ENCODE measurements at regions of chr1 and their contacts with region 1.

Region 1: DNA sequence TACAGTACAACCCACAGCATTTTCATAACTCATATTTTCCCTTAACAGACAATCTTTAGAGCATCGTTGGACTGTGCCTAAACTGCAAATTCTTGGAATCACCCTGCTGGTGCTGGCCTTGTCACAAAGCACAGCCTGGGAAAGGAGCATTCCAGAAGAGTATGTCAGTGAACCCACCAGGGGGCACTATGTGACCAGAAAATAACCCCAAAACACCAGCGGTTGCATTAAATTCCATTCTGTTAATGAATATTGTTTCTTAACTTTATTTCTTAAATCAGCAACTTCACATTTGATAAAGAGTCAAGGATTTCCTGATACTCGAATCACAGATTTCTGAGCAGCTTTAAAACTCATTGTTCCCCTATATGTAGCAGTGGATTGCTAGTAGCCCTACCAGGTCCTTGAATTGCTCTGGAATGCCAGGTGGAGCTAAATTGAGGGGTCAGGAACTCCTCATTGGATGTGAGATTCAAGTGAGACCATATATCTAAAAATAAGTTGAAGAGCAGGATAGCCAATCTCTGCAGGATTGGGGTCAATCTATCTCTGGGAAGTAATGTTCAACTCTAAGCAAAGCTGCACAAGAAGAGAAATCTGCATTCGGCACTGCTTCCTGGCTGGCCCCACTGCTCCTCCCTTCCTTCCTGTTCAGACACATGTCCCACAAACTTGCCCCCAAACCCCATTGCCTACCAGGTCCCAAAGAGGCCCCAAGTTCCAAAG is 12.7 kb upstream of the RAB4A start:
- DNase-seq: peak; percentile 59 to 72
- ATAC-seq: peak; percentile 87 to 91
- H3K4me3 ChIP-seq: no peak overlapping the region
- H3K27ac ChIP-seq: no peak overlapping the region
- H3K4me1 ChIP-seq: peaks cover 11% of the 10 kb centered on the region
- CTCF ChIP-seq: peak; percentile 96
- EP300 ChIP-seq: no peak
- POLR2A ChIP-seq: no peak
- RAD21 ChIP-seq: peak; percentile 94 to 96

Region 2: GRCh38 chr1:228664399-228664914 is 593.7 kb before region 1 on chr1:
- CTCF ChIA-PET with region 1: interaction called, 60 read pairs
- POLR2A ChIA-PET with region 1: no interaction called
- DNase-seq: peak; percentile 75 to 84
- ATAC-seq: peak; percentile 81 to 90
- H3K4me3 ChIP-seq: peak overlapping the region; percentile 39
- H3K27ac ChIP-seq: peak overlapping the region; percentile 48 to 68; a peak in 3 of 6 replicates
- H3K4me1 ChIP-seq: no peaks in the 10 kb centered on the region
- CTCF ChIP-seq: peak; percentile 94
- EP300 ChIP-seq: no peak
- POLR2A ChIP-seq: no peak
- RAD21 ChIP-seq: peak; percentile 96 to 97

Region 3: GRCh38 chr1:228734881-228735801 is 523.1 kb before region 1 on chr1 and contains the start of gene RHOU:
- CTCF ChIA-PET with region 1: interaction called, 10 read pairs
- POLR2A ChIA-PET with region 1: interaction called, 4 read pairs
- DNase-seq: peak; percentile 67 to 68
- ATAC-seq: peak; percentile 95
- H3K4me3 ChIP-seq: peak within 1 kb of the TSS; percentile 88
- H3K27ac ChIP-seq: peak within 1 kb of the TSS; percentile 93 to 95
- H3K4me1 ChIP-seq: peaks cover 18% of the 10 kb centered on the region; the same call in 2 of the 3 replicates
- CTCF ChIP-seq: peak; percentile 96
- EP300 ChIP-seq: no peak
- POLR2A ChIP-seq: peak; percentile 37; the same call in 1 of the 2 replicates
- RAD21 ChIP-seq: peak; percentile 56 to 98
- polyA plus RNA-seq, gene RHOU: 11.5 and 12.8 TPM in 2 replicates

Region 4: DNA sequence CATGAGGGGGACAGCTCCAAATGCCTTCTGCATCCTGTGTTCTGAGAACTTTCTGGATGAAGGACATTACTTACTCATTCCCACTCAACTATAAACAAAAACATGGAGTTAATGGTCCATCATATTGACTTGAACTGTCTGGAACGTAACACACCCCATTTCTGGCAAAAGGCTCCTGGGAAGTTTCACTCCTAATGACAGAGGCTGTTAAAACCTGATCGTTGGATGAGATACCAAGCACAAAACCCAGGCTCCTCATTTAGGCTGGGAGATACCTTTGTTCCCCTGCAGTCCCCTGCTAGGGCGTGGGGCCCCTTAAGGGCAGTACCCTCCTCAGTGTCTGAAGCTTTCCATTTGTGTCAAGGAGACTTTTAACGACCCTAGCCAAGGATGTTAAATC is 444.0 kb before region 1 on chr1:
- CTCF ChIA-PET with region 1: no interaction called
- POLR2A ChIA-PET with region 1: no interaction called
- DNase-seq: no peak
- ATAC-seq: no peak
- H3K4me3 ChIP-seq: no peak overlapping the region
- H3K27ac ChIP-seq: no peak overlapping the region
- H3K4me1 ChIP-seq: peaks cover 11% of the 10 kb centered on the region
- CTCF ChIP-seq: no peak
- EP300 ChIP-seq: no peak
- POLR2A ChIP-seq: no peak
- RAD21 ChIP-seq: no peak

Region 5: GRCh38 chr1:229199211-229199849 is 58.9 kb before region 1 on chr1:
- CTCF ChIA-PET with region 1: no interaction called
- POLR2A ChIA-PET with region 1: no interaction called
- DNase-seq: no peak
- ATAC-seq: no peak
- H3K4me3 ChIP-seq: no peak overlapping the region
- H3K27ac ChIP-seq: no peak overlapping the region
- H3K4me1 ChIP-seq: no peaks in the 10 kb centered on the region
- CTCF ChIP-seq: no peak
- EP300 ChIP-seq: no peak
- POLR2A ChIP-seq: no peak
- RAD21 ChIP-seq: no peak

Region 6: GRCh38 chr1:229270547-229271447 is 12.6 kb after region 1 on chr1 and contains the start of gene RAB4A:
- CTCF ChIA-PET with region 1: interaction called, 33 read pairs
- POLR2A ChIA-PET with region 1: interaction called, 7 read pairs
- DNase-seq: peak; percentile 70 to 93
- ATAC-seq: peak; percentile 94 to 95
- H3K4me3 ChIP-seq: peak within 1 kb of the TSS; percentile 79
- H3K27ac ChIP-seq: peak within 1 kb of the TSS; percentile 89 to 99
- H3K4me1 ChIP-seq: peaks cover 33% of the 10 kb centered on the region
- CTCF ChIP-seq: no peak
- EP300 ChIP-seq: no peak
- POLR2A ChIP-seq: peak; percentile 80
- RAD21 ChIP-seq: no peak
- polyA plus RNA-seq, gene RAB4A: 20.6 and 38.4 TPM in 2 replicates

Region 7: DNA sequence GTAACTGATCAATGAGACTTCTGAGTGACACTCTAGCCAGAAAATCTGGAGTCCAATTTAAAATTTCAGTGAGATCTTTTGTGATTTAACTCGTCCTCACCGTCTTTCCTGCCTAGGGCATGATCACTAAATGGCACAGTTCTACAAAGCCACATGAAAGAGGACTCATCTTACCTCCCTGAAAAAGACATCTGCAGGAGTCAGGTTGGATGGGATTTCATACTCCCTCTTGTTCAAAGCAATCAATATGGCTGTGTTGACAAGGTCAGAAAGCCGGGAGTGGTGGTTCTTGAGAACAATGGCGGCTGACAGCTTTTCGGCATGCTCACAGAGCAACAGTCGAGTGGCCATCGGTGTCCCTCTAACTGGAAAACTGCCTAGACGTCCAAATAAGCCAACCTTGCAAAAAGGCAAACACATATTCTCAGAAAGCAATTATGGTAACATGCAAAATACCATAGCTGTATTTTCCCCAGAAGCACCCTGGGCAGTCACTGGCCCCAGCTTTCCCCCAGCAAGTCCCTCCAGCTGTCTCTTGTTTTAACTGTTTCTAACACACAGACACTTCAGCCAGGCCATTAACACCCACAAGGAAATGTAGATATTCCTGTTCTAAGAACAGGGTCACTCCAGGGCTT is 212.3 kb after region 1 on chr1:
- CTCF ChIA-PET with region 1: interaction called, 36 read pairs
- POLR2A ChIA-PET with region 1: no interaction called
- DNase-seq: no peak
- ATAC-seq: no peak
- H3K4me3 ChIP-seq: no peak overlapping the region
- H3K27ac ChIP-seq: no peak overlapping the region
- H3K4me1 ChIP-seq: no peaks in the 10 kb centered on the region
- CTCF ChIP-seq: no peak
- EP300 ChIP-seq: no peak
- POLR2A ChIP-seq: no peak
- RAD21 ChIP-seq: no peak

Region 8: GRCh38 chr1:229495782-229496181 is 237.6 kb after region 1 on chr1:
- CTCF ChIA-PET with region 1: interaction called, 15 read pairs
- POLR2A ChIA-PET with region 1: no interaction called
- DNase-seq: no peak
- ATAC-seq: no peak
- H3K4me3 ChIP-seq: no peak overlapping the region
- H3K27ac ChIP-seq: no peak overlapping the region
- H3K4me1 ChIP-seq: no peaks in the 10 kb centered on the region
- CTCF ChIP-seq: no peak
- EP300 ChIP-seq: no peak
- POLR2A ChIP-seq: no peak
- RAD21 ChIP-seq: no peak

Region 9: DNA sequence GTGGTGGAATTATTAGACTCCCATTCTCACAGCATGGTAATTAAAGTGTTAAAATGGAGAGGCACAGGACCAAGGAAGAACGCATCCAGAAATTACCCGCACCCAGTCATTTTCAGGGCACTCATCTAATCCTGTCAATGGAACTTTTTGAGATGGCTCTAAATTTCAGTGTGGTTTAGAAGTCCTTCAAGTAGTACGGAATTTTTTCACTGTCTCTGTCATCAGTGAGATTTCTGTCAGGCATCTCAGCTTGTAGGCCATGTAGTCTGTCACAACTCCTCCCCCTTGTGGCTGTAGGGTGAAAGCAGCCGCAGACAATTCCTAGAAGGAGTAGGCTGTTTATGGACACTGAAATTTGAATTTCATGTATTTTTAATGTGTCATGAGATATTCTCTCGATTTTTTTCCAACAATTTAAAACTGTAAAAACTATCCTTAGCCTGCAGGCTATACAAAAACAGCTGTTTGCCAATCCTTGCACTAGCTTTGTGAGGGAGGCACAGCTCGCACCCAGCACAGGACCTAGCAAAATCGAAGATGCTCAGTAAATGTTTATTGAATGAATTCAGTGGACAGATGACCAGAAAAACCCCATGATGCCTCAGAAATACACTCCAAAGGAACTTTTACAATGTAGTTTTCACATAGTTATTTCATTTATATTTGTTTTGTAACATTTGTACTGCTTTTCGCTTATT is 256.5 kb after region 1 on chr1:
- CTCF ChIA-PET with region 1: interaction called, 29 read pairs
- POLR2A ChIA-PET with region 1: no interaction called
- DNase-seq: peak; percentile 64 to 75
- ATAC-seq: peak; percentile 99
- H3K4me3 ChIP-seq: no peak overlapping the region
- H3K27ac ChIP-seq: no peak overlapping the region
- H3K4me1 ChIP-seq: no peaks in the 10 kb centered on the region
- CTCF ChIP-seq: peak; percentile 73
- EP300 ChIP-seq: no peak
- POLR2A ChIP-seq: no peak
- RAD21 ChIP-seq: peak; percentile 61 to 69